ENCODE measurements at regions of chr3 and their contacts with region 1.

Region 1: GRCh38 chr3:88003115-88003755 is 55.6 kb downstream of the CGGBP1 start:
- DNase-seq: peak; percentile 67
- ATAC-seq: no peak
- H3K4me3 ChIP-seq: no peak overlapping the region
- H3K4me3 Mint-ChIP-seq: no peak overlapping the region
- H3K27ac ChIP-seq: no peak overlapping the region
- H3K27ac Mint-ChIP-seq: no peak overlapping the region
- H3K4me1 ChIP-seq: peaks cover 0 to 2% of the 10 kb centered on the region in 2 donors
- H3K4me1 Mint-ChIP-seq: peaks cover 11% of the 10 kb centered on the region
- H3K27me3 ChIP-seq: no peaks in the 10 kb centered on the region
- H3K27me3 Mint-ChIP-seq: no peaks in the 10 kb centered on the region
- CTCF ChIP-seq: peak; percentile 78

Region 2: DNA sequence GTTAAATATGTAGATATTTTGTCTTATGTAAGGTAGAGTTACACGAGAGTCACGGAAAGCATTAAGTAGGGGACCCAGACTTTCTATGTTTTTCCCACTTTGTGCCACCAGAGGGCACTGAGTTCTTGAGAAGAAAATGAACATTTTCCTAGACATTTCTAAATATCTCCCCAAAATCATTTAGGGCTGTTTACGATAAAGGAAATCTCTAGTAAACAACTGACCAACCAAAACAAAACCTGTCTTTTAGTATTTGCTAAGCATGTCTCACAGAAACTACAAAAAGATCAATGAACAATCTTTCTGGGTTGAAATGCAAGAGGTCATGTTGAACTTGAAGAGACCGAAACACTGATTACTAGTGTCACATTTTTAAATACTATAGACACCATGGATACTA is 743.0 kb before region 1 on chr3:
- CTCF ChIA-PET with region 1: interaction called, 10 read pairs
- POLR2A ChIA-PET with region 1: no interaction called
- intact Hi-C with region 1: loop called (anchors 10 kb)
- DNase-seq: peak; percentile 61
- ATAC-seq: peak; percentile 60
- H3K4me3 ChIP-seq: no peak overlapping the region
- H3K4me3 Mint-ChIP-seq: no peak overlapping the region
- H3K27ac ChIP-seq: no peak overlapping the region
- H3K27ac Mint-ChIP-seq: no peak overlapping the region
- H3K4me1 ChIP-seq: no peaks in the 10 kb centered on the region
- H3K4me1 Mint-ChIP-seq: peaks cover 2% of the 10 kb centered on the region
- H3K27me3 ChIP-seq: no peaks in the 10 kb centered on the region
- H3K27me3 Mint-ChIP-seq: no peaks in the 10 kb centered on the region
- CTCF ChIP-seq: peak; percentile 83

Region 3: DNA sequence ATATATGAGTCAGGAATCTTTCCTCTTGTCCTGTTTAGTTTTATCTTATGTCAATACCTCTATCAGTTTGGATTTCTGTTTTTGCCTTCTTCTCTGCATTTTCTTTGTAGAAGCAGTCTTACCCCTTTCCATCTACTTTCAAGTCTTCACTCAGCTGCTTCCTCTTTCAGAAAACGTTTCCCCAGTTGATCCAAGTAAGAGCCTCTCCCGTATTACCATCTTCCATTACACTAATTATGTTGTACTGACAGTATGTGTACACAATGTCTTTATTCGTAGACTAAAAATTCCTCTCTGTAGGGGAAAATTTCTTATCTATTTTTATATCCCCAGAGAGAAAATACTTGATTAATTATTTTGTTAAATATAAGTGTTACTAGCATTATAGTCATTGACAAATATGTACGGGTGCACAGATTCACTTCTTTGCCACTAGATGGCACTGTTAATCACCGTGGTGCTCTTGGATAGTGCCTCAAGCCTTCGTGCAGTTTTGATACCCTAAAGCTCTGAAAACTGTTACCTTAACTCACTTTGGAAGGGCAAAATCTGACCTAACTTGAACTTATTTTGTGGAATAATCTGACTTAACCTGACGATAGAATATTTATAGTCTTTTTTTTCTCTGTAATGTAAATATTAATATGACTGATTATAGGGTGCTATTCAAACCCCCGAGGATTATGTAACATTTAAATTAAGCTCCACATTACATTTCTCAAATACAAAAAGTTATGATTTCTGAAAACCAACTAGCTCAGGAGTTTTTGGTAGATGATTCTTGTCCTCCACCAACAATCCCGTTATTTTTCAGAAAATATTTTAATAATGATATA is 652.7 kb before region 1 on chr3:
- CTCF ChIA-PET with region 1: interaction called, 83 read pairs
- POLR2A ChIA-PET with region 1: no interaction called
- intact Hi-C with region 1: loop called (anchors 1 kb)
- DNase-seq: peak; percentile 61
- ATAC-seq: peak; percentile 67
- H3K4me3 ChIP-seq: no peak overlapping the region
- H3K4me3 Mint-ChIP-seq: no peak overlapping the region
- H3K27ac ChIP-seq: no peak overlapping the region
- H3K27ac Mint-ChIP-seq: no peak overlapping the region
- H3K4me1 ChIP-seq: no peaks in the 10 kb centered on the region
- H3K4me1 Mint-ChIP-seq: no peaks in the 10 kb centered on the region
- H3K27me3 ChIP-seq: no peaks in the 10 kb centered on the region
- H3K27me3 Mint-ChIP-seq: peaks cover 8% of the 10 kb centered on the region
- CTCF ChIP-seq: peak; percentile 99

Region 4: GRCh38 chr3:87900061-87900460 is 103.2 kb before region 1 on chr3:
- CTCF ChIA-PET with region 1: no interaction called
- POLR2A ChIA-PET with region 1: no interaction called
- intact Hi-C with region 1: loop called (anchors 1 kb)
- DNase-seq: no peak
- ATAC-seq: no peak
- H3K4me3 ChIP-seq: no peak overlapping the region
- H3K4me3 Mint-ChIP-seq: no peak overlapping the region
- H3K27ac ChIP-seq: no peak overlapping the region
- H3K27ac Mint-ChIP-seq: no peak overlapping the region
- H3K4me1 ChIP-seq: no peaks in the 10 kb centered on the region
- H3K4me1 Mint-ChIP-seq: no peaks in the 10 kb centered on the region
- H3K27me3 ChIP-seq: no peaks in the 10 kb centered on the region
- H3K27me3 Mint-ChIP-seq: no peaks in the 10 kb centered on the region
- CTCF ChIP-seq: peak; percentile 35

Region 5: DNA sequence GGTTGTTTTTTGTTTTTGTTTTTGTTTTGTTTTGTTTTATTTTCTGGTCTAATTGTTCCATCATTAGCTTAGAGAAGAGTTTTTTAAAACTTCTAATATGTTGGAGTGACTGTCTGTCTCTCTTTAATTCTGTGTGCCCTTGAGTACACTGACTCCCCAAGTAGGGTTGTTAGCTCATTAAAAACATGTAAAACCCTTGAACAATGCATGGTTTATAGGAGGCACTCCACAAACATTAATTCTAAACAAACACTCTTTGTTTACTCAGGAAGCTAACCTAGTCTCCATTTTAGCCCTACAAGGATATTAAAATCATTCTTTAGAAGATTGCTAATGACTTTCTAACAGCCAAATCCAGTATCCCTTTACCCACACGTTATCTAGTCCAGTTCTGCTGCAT is 44.9 kb before region 1 on chr3:
- CTCF ChIA-PET with region 1: no interaction called
- POLR2A ChIA-PET with region 1: no interaction called
- intact Hi-C with region 1: no loop called
- DNase-seq: no peak
- ATAC-seq: no peak
- H3K4me3 ChIP-seq: no peak overlapping the region
- H3K4me3 Mint-ChIP-seq: no peak overlapping the region
- H3K27ac ChIP-seq: no peak overlapping the region
- H3K27ac Mint-ChIP-seq: no peak overlapping the region
- H3K4me1 ChIP-seq: no peaks in the 10 kb centered on the region
- H3K4me1 Mint-ChIP-seq: no peaks in the 10 kb centered on the region
- H3K27me3 ChIP-seq: no peaks in the 10 kb centered on the region
- H3K27me3 Mint-ChIP-seq: peaks cover 14% of the 10 kb centered on the region
- CTCF ChIP-seq: no peak

Region 6: GRCh38 chr3:88113311-88114162 is 110.3 kb after region 1 on chr3:
- CTCF ChIA-PET with region 1: interaction called, 11 read pairs
- POLR2A ChIA-PET with region 1: no interaction called
- intact Hi-C with region 1: loop called (anchors 1 kb)
- DNase-seq: peak; percentile 75
- ATAC-seq: peak; percentile 84
- H3K4me3 ChIP-seq: no peak overlapping the region
- H3K4me3 Mint-ChIP-seq: no peak overlapping the region
- H3K27ac ChIP-seq: no peak overlapping the region
- H3K27ac Mint-ChIP-seq: peak overlapping the region; percentile 22
- H3K4me1 ChIP-seq: no peaks in the 10 kb centered on the region
- H3K4me1 Mint-ChIP-seq: peaks cover 8% of the 10 kb centered on the region
- H3K27me3 ChIP-seq: no peaks in the 10 kb centered on the region
- H3K27me3 Mint-ChIP-seq: no peaks in the 10 kb centered on the region
- CTCF ChIP-seq: peak; percentile 87

Region 7: DNA sequence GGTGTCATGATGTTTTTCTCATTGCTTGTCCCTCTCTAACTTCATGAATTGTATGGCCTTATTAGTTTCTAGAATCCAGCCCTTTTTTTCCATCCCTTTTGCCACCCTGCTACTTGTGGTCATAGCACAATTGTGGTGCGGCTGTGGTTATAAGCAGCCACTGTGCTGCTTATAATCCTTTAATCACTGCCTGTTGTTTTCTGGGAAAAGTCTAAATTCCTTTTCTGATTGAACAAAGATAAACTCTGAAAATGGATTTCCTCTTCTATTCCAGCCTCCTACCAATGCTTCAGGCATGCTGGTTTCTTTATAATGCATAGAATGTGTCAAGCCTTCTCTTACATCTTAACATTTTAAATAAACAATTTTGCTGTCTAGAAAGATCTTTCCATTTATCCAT is 466.0 kb after region 1 on chr3:
- CTCF ChIA-PET with region 1: no interaction called
- POLR2A ChIA-PET with region 1: no interaction called
- intact Hi-C with region 1: no loop called
- DNase-seq: no peak
- ATAC-seq: no peak
- H3K4me3 ChIP-seq: no peak overlapping the region
- H3K4me3 Mint-ChIP-seq: no peak overlapping the region
- H3K27ac ChIP-seq: no peak overlapping the region
- H3K27ac Mint-ChIP-seq: no peak overlapping the region
- H3K4me1 ChIP-seq: no peaks in the 10 kb centered on the region
- H3K4me1 Mint-ChIP-seq: no peaks in the 10 kb centered on the region
- H3K27me3 ChIP-seq: no peaks in the 10 kb centered on the region
- H3K27me3 Mint-ChIP-seq: no peaks in the 10 kb centered on the region
- CTCF ChIP-seq: no peak

Measured in B cell (primary cell).